ENCODE measurements at regions of chr17 and their contacts with region 1.

Region 1: GRCh38 chr17:34980681-34981537 is 597 bp downstream of the LIG3 start:
- DNase-seq: no peak
- ATAC-seq: peak; percentile 96
- H3K4me3 ChIP-seq: peak overlapping the region; percentile 66 to 79
- H3K27ac ChIP-seq: peak overlapping the region; percentile 97
- H3K4me1 ChIP-seq: peaks cover 15% of the 10 kb centered on the region
- H3K27me3 ChIP-seq: no peaks in the 10 kb centered on the region
- CTCF ChIP-seq: peak; percentile 41

Region 2: GRCh38 chr17:34913001-34913400 is 67.9 kb before region 1 on chr17:
- CTCF ChIA-PET with region 1: no interaction called
- POLR2A ChIA-PET with region 1: no interaction called
- in situ Hi-C with region 1: no loop called
- intact Hi-C with region 1: loop called (anchors 10 kb)
- DNase-seq: no peak
- ATAC-seq: no peak
- H3K4me3 ChIP-seq: no peak overlapping the region
- H3K27ac ChIP-seq: no peak overlapping the region
- H3K4me1 ChIP-seq: no peaks in the 10 kb centered on the region
- H3K27me3 ChIP-seq: no peaks in the 10 kb centered on the region; the same call in 1 of the 2 replicates
- CTCF ChIP-seq: no peak

Region 3: GRCh38 chr17:34961093-34961911 is 19.6 kb before region 1 on chr17 and contains the starts of genes CCT6B and ZNF830:
- CTCF ChIA-PET with region 1: no interaction called
- POLR2A ChIA-PET with region 1: interaction called, 13 read pairs
- in situ Hi-C with region 1: no loop called
- intact Hi-C with region 1: no loop called
- DNase-seq: peak; percentile 78
- ATAC-seq: peak; percentile 98
- H3K4me3 ChIP-seq: peak within 1 kb of the TSS; percentile 98 to 99
- H3K27ac ChIP-seq: peak within 1 kb of the TSS; percentile 96
- H3K4me1 ChIP-seq: peaks cover 15% of the 10 kb centered on the region; the same call in 1 of the 2 replicates
- H3K27me3 ChIP-seq: no peaks in the 10 kb centered on the region; the same call in 1 of the 2 replicates
- CTCF ChIP-seq: no peak
- total RNA-seq, gene CCT6B: 1.5 TPM
- total RNA-seq, gene ZNF830: 17.5 TPM

Measured in Panc1 (cell line).